ENCODE measurements at regions of chr1 and their contacts with region 1.

Region 1: GRCh38 chr1:153202006-153202405 is 1.2 kb upstream of the LELP1 start:
- DNase-seq: no peak
- ATAC-seq: no peak
- H3K4me3 Mint-ChIP-seq: no peak overlapping the region
- H3K27ac Mint-ChIP-seq: no peak overlapping the region
- H3K4me1 Mint-ChIP-seq: no peaks in the 10 kb centered on the region
- H3K27me3 Mint-ChIP-seq: peaks cover 31% of the 10 kb centered on the region

Region 2: DNA sequence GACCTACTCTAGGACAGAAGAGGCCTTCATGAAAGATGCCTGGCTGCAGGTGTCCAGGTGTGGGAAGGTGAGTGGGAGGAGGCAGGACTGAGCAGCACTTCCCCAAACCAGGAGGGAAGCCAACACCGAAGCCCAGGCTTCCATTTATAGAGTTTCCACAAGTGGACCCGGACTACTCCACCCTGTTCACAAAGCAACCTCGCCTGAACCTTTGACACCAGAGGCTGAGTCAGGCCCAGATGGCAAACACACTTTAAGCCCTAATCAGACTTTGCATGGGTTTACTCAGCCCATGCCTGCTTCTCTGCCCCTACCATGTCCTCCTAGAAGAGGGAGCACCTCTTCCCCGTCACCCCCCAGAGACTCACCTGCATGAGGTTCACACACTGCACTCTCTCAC is 29.4 kb after region 1 on chr1:
- CTCF ChIA-PET with region 1: interaction called, 11 read pairs
- POLR2A ChIA-PET with region 1: no interaction called
- intact Hi-C with region 1: no loop called
- DNase-seq: no peak
- ATAC-seq: no peak
- H3K4me3 Mint-ChIP-seq: no peak overlapping the region
- H3K27ac Mint-ChIP-seq: no peak overlapping the region
- H3K4me1 Mint-ChIP-seq: no peaks in the 10 kb centered on the region
- H3K27me3 Mint-ChIP-seq: peaks cover 15% of the 10 kb centered on the region

Region 3: GRCh38 chr1:153324912-153325311 is 122.9 kb after region 1 on chr1:
- CTCF ChIA-PET with region 1: no interaction called
- POLR2A ChIA-PET with region 1: no interaction called
- intact Hi-C with region 1: no loop called
- DNase-seq: no peak
- ATAC-seq: no peak
- H3K4me3 Mint-ChIP-seq: no peak overlapping the region
- H3K27ac Mint-ChIP-seq: no peak overlapping the region
- H3K4me1 Mint-ChIP-seq: no peaks in the 10 kb centered on the region
- H3K27me3 Mint-ChIP-seq: no peaks in the 10 kb centered on the region

Measured in activated CD4-positive, alpha-beta T cell treated with anti-CD3 and anti-CD28 coated beads for 36 hours (primary cell).